ENCODE measurements at regions of chr19 and their contacts with region 1.

Region 1: DNA sequence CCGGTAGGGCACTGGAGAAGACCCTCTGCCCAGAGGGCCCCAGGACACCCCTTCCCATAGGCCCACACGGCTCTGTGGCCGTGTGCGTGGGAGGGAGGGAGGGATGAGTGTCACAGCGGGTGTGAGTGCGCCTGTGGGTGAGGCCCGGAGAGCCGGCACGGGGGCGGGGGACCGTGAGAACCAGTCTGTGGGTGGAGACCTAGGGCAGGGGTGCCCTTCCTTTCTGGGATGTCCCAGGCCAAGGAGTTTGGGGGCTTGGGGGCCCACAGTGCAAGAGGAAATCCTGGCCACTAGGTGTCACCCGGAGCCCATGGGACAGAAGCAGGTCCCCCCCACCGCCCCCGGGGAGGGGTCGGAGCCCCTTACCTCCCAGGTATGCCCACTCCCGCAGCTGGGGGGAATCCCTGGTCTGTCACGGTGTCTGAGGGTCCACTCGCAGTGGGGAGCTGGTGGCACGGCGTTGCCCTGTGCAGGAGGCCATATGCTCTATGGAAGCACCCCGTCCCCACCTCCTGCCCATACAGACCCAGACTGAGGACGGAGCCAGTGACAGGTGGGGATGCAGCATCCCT is 16.0 kb upstream of the SLC7A10 start:
- DNase-seq: peak; percentile 48 to 66 (median 59)
- H3K4me3 ChIP-seq: no peak overlapping the region
- H3K27ac ChIP-seq: no peak overlapping the region
- H3K4me1 ChIP-seq: no peaks in the 10 kb centered on the region
- H3K27me3 ChIP-seq: no peaks in the 10 kb centered on the region

Region 2: DNA sequence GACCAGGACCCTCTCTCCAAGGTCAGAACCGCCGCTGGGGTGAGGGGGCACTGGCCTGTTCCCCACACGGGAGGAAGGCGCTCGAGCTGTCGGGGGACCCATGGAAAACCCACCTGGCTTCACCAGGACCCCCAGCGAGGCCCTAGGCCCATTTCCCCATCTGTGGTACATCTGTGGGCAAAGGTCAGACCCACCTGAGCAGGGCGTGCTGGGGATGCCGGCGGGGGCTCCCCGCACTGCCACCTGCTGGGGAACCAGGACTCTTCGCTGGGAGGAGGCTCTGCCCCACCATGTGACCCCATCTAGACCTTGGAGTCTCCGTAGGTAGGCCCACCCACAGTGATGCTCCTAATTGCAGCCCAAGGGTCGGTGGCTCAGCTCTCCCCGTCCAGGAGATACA is 109.2 kb before region 1 on chr19:
- CTCF ChIA-PET with region 1: no interaction called
- POLR2A ChIA-PET with region 1: no interaction called
- DNase-seq: no peak
- H3K4me3 ChIP-seq: no peak overlapping the region
- H3K27ac ChIP-seq: no peak overlapping the region
- H3K4me1 ChIP-seq: peaks cover 0 to 5% (median 2%) of the 10 kb centered on the region in 4 experiments
- H3K27me3 ChIP-seq: peaks cover 0 to 10% (median 0%) of the 10 kb centered on the region in 5 experiments

Region 3: DNA sequence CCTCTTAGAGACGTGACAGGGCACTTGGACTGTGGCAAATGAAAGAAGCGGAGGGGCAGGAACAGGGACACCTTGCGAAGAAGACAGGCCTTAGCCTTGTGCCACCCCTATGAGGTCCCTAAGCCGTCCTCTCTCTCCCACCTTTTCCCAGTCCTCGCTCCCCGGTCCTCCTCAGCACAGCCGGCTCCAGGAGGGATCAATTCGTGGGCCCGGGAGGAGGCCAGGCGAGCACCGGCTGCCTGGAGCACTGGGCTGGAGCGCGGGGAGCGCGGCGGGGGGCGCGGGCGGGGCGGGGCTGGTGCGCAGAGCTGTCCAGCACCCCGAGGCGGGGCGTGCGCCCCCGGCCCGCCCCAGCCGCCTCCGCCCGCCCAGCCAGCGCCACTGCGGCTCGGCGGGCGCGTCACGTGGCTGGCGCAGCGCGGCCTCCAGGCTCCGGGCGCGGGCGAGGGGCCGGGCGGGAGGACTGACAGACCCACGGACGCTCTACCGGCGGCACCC is 47.7 kb before region 1 on chr19 and contains the start of gene LRP3:
- CTCF ChIA-PET with region 1: no interaction called
- POLR2A ChIA-PET with region 1: no interaction called
- DNase-seq: peak in 2 of 3 donors; percentile 33 to 40
- H3K4me3 ChIP-seq: peak within 1 kb of the TSS; percentile 21 to 66 (median 49)
- H3K27ac ChIP-seq: no peak within 1 kb of the TSS
- H3K4me1 ChIP-seq: peaks cover 0 to 16% (median 9%) of the 10 kb centered on the region in 4 experiments
- H3K27me3 ChIP-seq: peaks cover 0 to 37% (median 8%) of the 10 kb centered on the region in 5 experiments

Region 4: GRCh38 chr19:33373701-33374421 is 132.2 kb after region 1 on chr19 and contains the start of gene CEBPG:
- CTCF ChIA-PET with region 1: interaction called, 19 read pairs
- POLR2A ChIA-PET with region 1: no interaction called
- DNase-seq: peak; percentile 70 to 85 (median 83)
- H3K4me3 ChIP-seq: peak within 1 kb of the TSS; percentile 64 to 96 (median 81)
- H3K27ac ChIP-seq: peak within 1 kb of the TSS; percentile 93 to 97
- H3K4me1 ChIP-seq: peaks cover 8 to 30% (median 23%) of the 10 kb centered on the region in 4 experiments
- H3K27me3 ChIP-seq: no peaks in the 10 kb centered on the region